ENCODE measurements at regions of chr2 and their contacts with region 1.

Region 1: DNA sequence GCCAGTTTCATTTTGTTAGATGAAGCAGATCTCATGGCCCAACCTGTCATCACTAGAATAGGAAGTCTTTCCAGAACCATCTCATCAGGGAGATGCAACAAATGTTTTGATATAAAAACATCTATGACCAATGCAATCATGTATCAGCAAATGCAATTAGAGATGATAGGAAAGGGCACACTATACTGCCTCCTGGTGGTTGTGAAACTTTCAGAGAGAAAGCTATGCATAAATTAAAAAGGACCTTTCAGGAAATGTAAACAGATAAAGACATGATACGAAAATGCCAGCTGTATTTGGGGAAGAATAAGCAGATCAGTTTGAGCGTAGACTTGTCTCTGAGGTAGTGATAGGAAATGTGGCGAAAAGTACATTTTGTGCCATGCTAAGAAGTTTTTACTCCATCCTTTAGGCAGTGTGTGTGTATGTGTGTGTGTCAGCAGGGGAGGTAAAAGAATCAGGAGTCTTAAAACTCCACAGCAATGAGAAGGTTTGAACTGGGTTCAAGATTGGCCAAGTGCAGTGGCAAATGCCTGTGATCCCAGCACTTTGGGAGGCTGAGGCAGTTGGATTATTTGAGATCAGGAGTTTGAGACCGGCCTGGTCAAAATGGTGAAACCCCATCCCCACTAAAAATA is 479.3 kb downstream of the CPS1 start:
- DNase-seq: peak; percentile 47
- ATAC-seq: peak; percentile 68
- H3K4me3 ChIP-seq: no peak overlapping the region
- H3K27ac ChIP-seq: no peak overlapping the region
- H3K4me1 ChIP-seq: no peaks in the 10 kb centered on the region
- H3K27me3 ChIP-seq: no peaks in the 10 kb centered on the region; a peak in 1 of 5 replicates
- CTCF ChIP-seq: peak; percentile 71
- EP300 ChIP-seq: no peak
- POLR2A ChIP-seq: no peak
- RAD21 ChIP-seq: peak; percentile 51; the same call in 1 of the 2 replicates

Region 2: GRCh38 chr2:210445116-210445707 is 590.5 kb before region 1 on chr2:
- CTCF ChIA-PET with region 1: interaction called, 4 read pairs
- POLR2A ChIA-PET with region 1: no interaction called
- in situ Hi-C with region 1: no loop called
- intact Hi-C with region 1: loop called (anchors 10 kb)
- DNase-seq: peak; percentile 18
- ATAC-seq: no peak
- H3K4me3 ChIP-seq: no peak overlapping the region
- H3K27ac ChIP-seq: no peak overlapping the region
- H3K4me1 ChIP-seq: 0 out of 2 replicates have a peak, but pooled peaks cover 5% of the 10 kb centered on the region
- H3K27me3 ChIP-seq: no peaks in the 10 kb centered on the region
- CTCF ChIP-seq: peak; percentile 65
- EP300 ChIP-seq: no peak
- POLR2A ChIP-seq: no peak
- RAD21 ChIP-seq: 0 out of 2 replicates have a peak, but pooled peaks have one; percentile 38

Region 3: GRCh38 chr2:210617732-210618330 is 417.8 kb before region 1 on chr2:
- CTCF ChIA-PET with region 1: interaction called, 23 read pairs
- POLR2A ChIA-PET with region 1: no interaction called
- in situ Hi-C with region 1: no loop called
- intact Hi-C with region 1: loop called (anchors 1 kb)
- DNase-seq: peak; percentile 64
- ATAC-seq: peak; percentile 96
- H3K4me3 ChIP-seq: no peak overlapping the region
- H3K27ac ChIP-seq: no peak overlapping the region
- H3K4me1 ChIP-seq: peaks cover 8% of the 10 kb centered on the region; the same call in 1 of the 2 replicates
- H3K27me3 ChIP-seq: no peaks in the 10 kb centered on the region
- CTCF ChIP-seq: peak; percentile 84
- EP300 ChIP-seq: no peak
- POLR2A ChIP-seq: no peak
- RAD21 ChIP-seq: peak; percentile 70

Region 4: GRCh38 chr2:210663631-210664089 is 372.0 kb before region 1 on chr2:
- CTCF ChIA-PET with region 1: interaction called, 6 read pairs
- POLR2A ChIA-PET with region 1: no interaction called
- in situ Hi-C with region 1: loop called (anchors 25 kb)
- intact Hi-C with region 1: loop called (anchors 1 kb)
- DNase-seq: peak; percentile 18
- ATAC-seq: peak; percentile 59; the same call in 2 of the 3 replicates
- H3K4me3 ChIP-seq: no peak overlapping the region
- H3K27ac ChIP-seq: no peak overlapping the region
- H3K4me1 ChIP-seq: peaks cover 11% of the 10 kb centered on the region
- H3K27me3 ChIP-seq: no peaks in the 10 kb centered on the region
- CTCF ChIP-seq: peak; percentile 49
- EP300 ChIP-seq: no peak
- POLR2A ChIP-seq: no peak
- RAD21 ChIP-seq: no peak

Region 5: DNA sequence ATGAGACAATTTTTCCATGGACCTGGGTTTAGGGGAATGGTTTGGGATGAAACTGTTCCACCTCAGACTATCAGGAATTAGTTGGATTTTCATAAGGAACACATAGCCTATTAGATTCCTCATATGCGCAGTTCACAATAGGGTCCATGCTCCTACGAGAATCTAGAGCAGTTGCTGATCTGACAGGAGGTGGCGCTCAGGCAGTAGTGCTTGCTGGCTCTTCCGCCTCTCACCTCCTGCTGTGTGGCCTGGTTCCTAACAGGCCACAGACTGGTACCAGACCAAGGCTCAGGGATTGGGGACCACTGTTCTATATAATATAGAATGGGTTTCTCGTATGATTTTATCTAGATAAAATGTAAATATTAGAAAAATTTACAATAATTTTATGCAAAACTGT is 140.5 kb before region 1 on chr2:
- CTCF ChIA-PET with region 1: interaction called, 8 read pairs
- POLR2A ChIA-PET with region 1: no interaction called
- in situ Hi-C with region 1: loop called (anchors 10 kb)
- intact Hi-C with region 1: loop called (anchors 1 kb)
- DNase-seq: peak; percentile 54
- ATAC-seq: peak; percentile 100
- H3K4me3 ChIP-seq: no peak overlapping the region
- H3K27ac ChIP-seq: no peak overlapping the region
- H3K4me1 ChIP-seq: peaks cover 14% of the 10 kb centered on the region; the same call in 1 of the 2 replicates
- H3K27me3 ChIP-seq: no peaks in the 10 kb centered on the region; a peak in 1 of 5 replicates
- CTCF ChIP-seq: peak; percentile 79
- EP300 ChIP-seq: no peak
- POLR2A ChIP-seq: no peak
- RAD21 ChIP-seq: peak; percentile 31; the same call in 1 of the 2 replicates

Region 6: DNA sequence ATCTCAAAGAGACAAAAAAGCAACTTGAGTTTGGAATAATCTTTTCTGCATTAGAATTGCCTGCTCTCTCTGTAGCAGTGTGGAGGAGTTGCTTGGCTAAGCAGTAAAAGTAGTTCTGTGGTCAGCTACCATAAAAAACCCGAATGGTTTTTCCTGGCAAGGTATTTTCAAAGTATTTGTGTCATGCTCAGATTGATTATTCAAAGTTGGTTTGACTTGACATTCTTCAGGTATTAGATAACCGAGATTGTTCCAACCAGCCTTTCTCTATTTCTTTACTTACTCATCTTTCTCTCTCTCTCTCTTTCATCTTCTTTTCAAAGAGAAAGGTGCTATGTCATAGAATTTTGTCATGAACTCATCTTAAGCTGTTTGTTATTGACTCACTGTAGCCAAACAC is 74.4 kb before region 1 on chr2:
- CTCF ChIA-PET with region 1: no interaction called
- POLR2A ChIA-PET with region 1: no interaction called
- in situ Hi-C with region 1: no loop called
- intact Hi-C with region 1: loop called (anchors 1 kb)
- DNase-seq: peak; percentile 58
- ATAC-seq: no peak
- H3K4me3 ChIP-seq: no peak overlapping the region
- H3K27ac ChIP-seq: no peak overlapping the region
- H3K4me1 ChIP-seq: peaks cover 70% of the 10 kb centered on the region
- H3K27me3 ChIP-seq: no peaks in the 10 kb centered on the region
- CTCF ChIP-seq: no peak
- EP300 ChIP-seq: 0 out of 4 replicates have a peak, but pooled peaks of 1 of the 2 experiments have one; percentile 39
- POLR2A ChIP-seq: no peak
- RAD21 ChIP-seq: no peak

Region 7: DNA sequence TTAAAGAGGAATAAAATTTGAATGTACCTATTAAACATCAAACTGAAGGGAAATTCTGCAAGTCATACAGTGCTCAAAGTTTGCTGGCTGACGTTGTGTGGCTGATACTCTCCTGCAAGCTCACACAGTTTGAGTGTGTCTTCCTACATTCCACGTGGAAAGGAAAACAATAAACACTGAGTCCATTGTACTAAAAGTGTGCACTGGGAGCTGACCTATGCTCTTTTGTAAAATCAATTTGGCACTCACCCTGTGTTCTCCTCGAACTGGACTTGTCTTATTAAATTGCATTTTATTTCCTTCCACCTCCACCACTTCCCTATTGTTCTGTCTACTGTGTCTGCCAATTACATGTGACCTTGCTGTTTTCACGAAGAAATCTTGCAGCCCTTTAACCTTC is 21.3 kb before region 1 on chr2:
- CTCF ChIA-PET with region 1: no interaction called
- POLR2A ChIA-PET with region 1: no interaction called
- in situ Hi-C with region 1: no loop called
- intact Hi-C with region 1: loop called (anchors 2 kb)
- DNase-seq: peak; percentile 86
- ATAC-seq: peak; percentile 99
- H3K4me3 ChIP-seq: peak overlapping the region in 1 of 3 experiments; percentile 2; a peak in 1 of 6 replicates
- H3K27ac ChIP-seq: peak overlapping the region; percentile 6
- H3K4me1 ChIP-seq: peaks cover 19% of the 10 kb centered on the region
- H3K27me3 ChIP-seq: no peaks in the 10 kb centered on the region
- CTCF ChIP-seq: no peak
- EP300 ChIP-seq: peak in 1 of 2 experiments; percentile 15; a peak in 1 of 4 replicates
- POLR2A ChIP-seq: no peak
- RAD21 ChIP-seq: no peak

Region 8: GRCh38 chr2:211854832-211855231 is 819.2 kb after region 1 on chr2:
- CTCF ChIA-PET with region 1: no interaction called
- POLR2A ChIA-PET with region 1: no interaction called
- in situ Hi-C with region 1: no loop called
- intact Hi-C with region 1: no loop called
- DNase-seq: no peak
- ATAC-seq: no peak
- H3K4me3 ChIP-seq: no peak overlapping the region
- H3K27ac ChIP-seq: no peak overlapping the region
- H3K4me1 ChIP-seq: no peaks in the 10 kb centered on the region
- H3K27me3 ChIP-seq: no peaks in the 10 kb centered on the region
- CTCF ChIP-seq: no peak
- EP300 ChIP-seq: no peak
- POLR2A ChIP-seq: no peak
- RAD21 ChIP-seq: no peak